CD8-positive, alpha-beta memory T cell (primary cell): ENCODE measurements at regions of chr19 and their contacts with region 1.

Region 1: GRCh38 chr19:57465495-57466395 is 8.8 kb upstream of the VN1R1 start:
- DNase-seq: peak in 1 of 5 donors; percentile 14
- H3K4me3 ChIP-seq: no peak overlapping the region
- H3K4me3 Mint-ChIP-seq: no peak overlapping the region
- H3K27ac ChIP-seq: no peak overlapping the region
- H3K27ac Mint-ChIP-seq: no peak overlapping the region
- H3K4me1 ChIP-seq: no peaks in the 10 kb centered on the region
- H3K4me1 Mint-ChIP-seq: no peaks in the 10 kb centered on the region
- H3K27me3 ChIP-seq: no peaks in the 10 kb centered on the region
- H3K27me3 Mint-ChIP-seq: no peaks in the 10 kb centered on the region

Region 2: DNA sequence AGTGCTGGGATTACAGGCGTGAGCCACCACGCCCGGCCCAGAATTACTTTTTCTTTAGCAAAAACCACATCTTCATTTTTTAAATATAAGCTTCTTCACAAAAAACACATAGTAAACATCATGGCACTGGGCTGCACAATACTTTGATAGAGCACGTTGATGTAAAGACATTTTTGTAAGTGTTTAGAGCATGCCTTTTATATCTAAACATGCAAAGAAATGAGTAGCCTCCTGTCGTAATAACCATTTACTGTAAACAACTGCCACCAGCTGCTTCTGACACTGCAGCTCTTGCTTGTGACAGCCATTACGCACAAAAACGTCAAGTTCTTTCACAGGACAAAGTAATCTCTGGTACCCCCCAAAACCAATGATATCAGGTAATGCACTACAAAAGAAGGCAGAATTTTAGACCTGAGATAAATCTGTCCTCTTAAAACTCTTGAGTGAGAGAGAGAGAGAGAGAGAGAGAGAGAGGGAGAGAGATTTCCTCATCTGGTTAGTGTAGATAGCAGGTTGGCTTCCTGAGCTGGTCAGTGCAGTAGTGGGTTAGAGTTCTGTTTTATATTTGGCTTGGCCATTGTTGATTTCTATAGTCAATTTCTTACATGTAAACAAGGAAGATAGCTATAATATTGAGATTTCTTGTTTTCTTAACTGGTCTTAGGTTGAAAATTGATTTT is 82.8 kb before region 1 on chr19:
- CTCF ChIA-PET with region 1: no interaction called
- POLR2A ChIA-PET with region 1: interaction called, 10 read pairs
- DNase-seq: no peak
- H3K4me3 ChIP-seq: no peak overlapping the region
- H3K4me3 Mint-ChIP-seq: no peak overlapping the region
- H3K27ac ChIP-seq: no peak overlapping the region
- H3K27ac Mint-ChIP-seq: no peak overlapping the region
- H3K4me1 ChIP-seq: no peaks in the 10 kb centered on the region
- H3K4me1 Mint-ChIP-seq: peaks cover 0 to 1% (median 0%) of the 10 kb centered on the region in 3 donors
- H3K27me3 ChIP-seq: no peaks in the 10 kb centered on the region
- H3K27me3 Mint-ChIP-seq: peaks cover 0 to 3% of the 10 kb centered on the region in 2 donors

Region 3: DNA sequence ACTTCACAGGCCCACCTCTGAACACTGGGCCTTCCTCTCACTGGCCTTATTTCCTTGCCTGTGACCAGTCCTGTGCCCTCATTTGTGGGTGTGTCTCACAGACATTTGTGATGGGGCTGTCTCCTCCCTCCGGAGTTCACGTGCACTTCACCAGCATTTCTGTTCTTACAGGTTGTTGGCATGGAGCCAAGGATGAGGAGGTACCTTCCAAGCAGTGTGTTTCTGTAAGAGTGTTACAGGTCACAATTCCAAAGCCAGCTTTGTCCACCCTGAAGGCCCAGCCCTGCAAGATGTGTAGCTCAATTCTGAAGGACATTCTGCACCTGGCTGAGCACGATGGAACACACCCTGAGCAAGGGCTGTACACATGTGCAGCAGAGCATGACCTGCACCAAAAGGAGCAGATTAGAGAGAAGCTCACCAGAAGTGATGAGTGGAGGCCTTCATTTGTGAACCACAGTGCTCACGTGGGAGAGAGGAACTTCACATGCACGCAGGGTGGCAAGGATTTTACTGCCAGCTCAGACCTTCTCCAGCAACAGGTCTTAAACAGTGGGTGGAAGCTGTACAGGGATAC is 22.5 kb before region 1 on chr19:
- CTCF ChIA-PET with region 1: no interaction called
- POLR2A ChIA-PET with region 1: no interaction called
- DNase-seq: no peak
- H3K4me3 ChIP-seq: no peak overlapping the region
- H3K4me3 Mint-ChIP-seq: no peak overlapping the region
- H3K27ac ChIP-seq: no peak overlapping the region
- H3K27ac Mint-ChIP-seq: no peak overlapping the region
- H3K4me1 ChIP-seq: no peaks in the 10 kb centered on the region
- H3K4me1 Mint-ChIP-seq: peaks cover 7 to 15% (median 8%) of the 10 kb centered on the region in 3 donors
- H3K27me3 ChIP-seq: no peaks in the 10 kb centered on the region
- H3K27me3 Mint-ChIP-seq: no peaks in the 10 kb centered on the region